Caco-2 (cell line): ENCODE measurements at regions of chr3 and their contacts with region 1.

Region 1: DNA sequence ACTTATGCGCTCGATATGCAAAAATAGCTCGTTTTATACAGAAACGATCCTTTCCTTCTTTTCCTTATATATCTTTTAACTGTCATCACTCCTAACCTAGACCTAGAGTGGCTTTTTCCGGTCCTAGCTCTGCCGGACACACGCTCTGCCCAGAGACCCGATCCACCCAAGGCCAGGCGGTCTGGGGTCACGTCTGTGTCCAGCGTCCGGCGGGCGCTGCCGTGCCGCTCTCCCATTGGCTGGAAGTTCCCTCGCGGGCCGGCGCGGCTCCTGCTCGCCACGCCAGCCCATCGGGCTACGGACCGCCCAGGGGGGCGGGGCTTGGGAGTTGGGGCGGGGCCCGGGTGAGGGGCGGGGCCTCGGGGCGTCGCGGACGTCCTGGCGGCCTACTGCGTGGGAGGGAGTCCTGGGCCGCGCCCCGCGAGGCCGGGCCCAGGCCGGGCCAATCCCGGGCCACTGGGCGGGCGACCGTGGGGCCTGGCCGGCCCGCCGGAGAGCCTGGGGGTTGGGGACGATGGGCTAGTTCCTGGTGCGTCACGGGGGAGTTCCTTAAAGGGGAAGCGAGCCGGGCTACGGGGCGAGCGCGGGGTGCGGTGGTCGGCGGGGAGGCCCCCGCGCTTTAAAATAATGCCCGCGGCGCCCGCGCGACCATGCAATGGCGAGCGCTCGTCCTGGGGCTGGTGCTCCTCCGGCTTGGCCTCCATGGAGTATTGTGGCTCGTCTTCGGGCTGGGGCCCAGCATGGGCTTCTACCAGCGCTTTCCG is at the start of gene EDEM1:
- DNase-seq: peak; percentile 93 to 97
- H3K4me3 ChIP-seq: peak within 1 kb of the TSS; percentile 94
- H3K4me3 Mint-ChIP-seq: peak within 1 kb of the TSS; percentile 77
- H3K27ac Mint-ChIP-seq: peak within 1 kb of the TSS; percentile 95
- H3K4me1 ChIP-seq: peaks cover 16% of the 10 kb centered on the region; the same call in 1 of the 2 replicates
- H3K4me1 Mint-ChIP-seq: peaks cover 12% of the 10 kb centered on the region
- H3K27me3 ChIP-seq: no peaks in the 10 kb centered on the region
- H3K27me3 Mint-ChIP-seq: no peaks in the 10 kb centered on the region
- CTCF ChIP-seq: no peak
- total RNA-seq, gene EDEM1: 42.6 and 51.3 TPM in 2 replicates

Region 2: DNA sequence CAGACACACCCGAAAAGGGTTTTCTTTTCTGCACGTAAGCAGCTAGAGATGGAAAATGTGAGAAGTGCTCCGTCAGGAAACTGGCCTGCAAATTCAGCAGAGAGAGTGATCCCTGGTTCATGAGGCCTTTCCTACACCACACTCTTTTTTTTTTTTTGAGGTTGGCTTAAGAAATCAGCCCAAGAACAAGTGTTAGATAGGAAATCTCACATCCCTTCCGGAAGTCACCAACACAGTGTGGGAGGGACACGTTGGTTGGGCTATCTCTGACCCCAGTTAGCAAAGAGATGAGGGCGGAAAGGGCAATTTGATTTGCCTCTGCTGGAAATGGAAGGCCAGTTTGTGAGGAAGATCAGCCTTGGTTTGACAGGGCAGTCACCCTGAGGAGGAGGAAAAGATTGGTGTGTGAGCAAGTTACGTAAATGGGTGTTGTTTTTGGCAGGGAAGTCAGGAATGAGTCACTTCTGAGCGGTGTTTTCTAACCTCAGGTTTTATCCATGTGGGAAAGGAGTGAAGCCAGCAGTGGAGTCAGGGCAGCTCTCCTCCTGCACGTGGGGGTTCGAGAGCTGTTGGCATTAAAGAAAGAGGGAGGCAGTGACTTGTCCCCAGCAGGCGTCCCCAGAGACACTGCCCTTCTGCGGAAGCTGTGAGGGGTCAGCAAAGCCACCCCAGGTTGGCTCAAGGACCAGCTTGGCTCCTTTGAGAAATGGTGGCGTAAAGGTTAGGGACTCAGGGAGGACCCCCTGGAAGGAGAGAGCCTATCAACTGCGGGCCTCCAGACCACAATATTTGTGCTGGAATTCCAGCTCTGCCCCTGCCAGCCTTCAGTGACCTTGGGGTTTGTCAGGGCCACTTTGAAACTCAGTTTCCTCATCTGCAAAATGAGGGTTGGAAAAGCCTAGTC is 445.7 kb before region 1 on chr3:
- CTCF ChIA-PET with region 1: no interaction called
- POLR2A ChIA-PET with region 1: no interaction called
- intact Hi-C with region 1: loop called (anchors 5 kb)
- DNase-seq: no peak
- H3K4me3 ChIP-seq: no peak overlapping the region
- H3K4me3 Mint-ChIP-seq: no peak overlapping the region
- H3K27ac Mint-ChIP-seq: no peak overlapping the region
- H3K4me1 ChIP-seq: peaks cover 36% of the 10 kb centered on the region
- H3K4me1 Mint-ChIP-seq: peaks cover 28% of the 10 kb centered on the region
- H3K27me3 ChIP-seq: no peaks in the 10 kb centered on the region
- H3K27me3 Mint-ChIP-seq: no peaks in the 10 kb centered on the region
- CTCF ChIP-seq: no peak

Region 3: GRCh38 chr3:5122030-5122740 is 65.2 kb before region 1 on chr3 and contains the start of gene ARL8B:
- CTCF ChIA-PET with region 1: no interaction called
- POLR2A ChIA-PET with region 1: interaction called, 3 read pairs
- intact Hi-C with region 1: loop called (anchors 1 kb)
- DNase-seq: peak; percentile 87 to 94
- H3K4me3 ChIP-seq: peak within 1 kb of the TSS; percentile 99
- H3K4me3 Mint-ChIP-seq: peak within 1 kb of the TSS; percentile 84
- H3K27ac Mint-ChIP-seq: peak within 1 kb of the TSS; percentile 84
- H3K4me1 ChIP-seq: peaks cover 3% of the 10 kb centered on the region; the same call in 1 of the 2 replicates
- H3K4me1 Mint-ChIP-seq: peaks cover 14% of the 10 kb centered on the region
- H3K27me3 ChIP-seq: no peaks in the 10 kb centered on the region
- H3K27me3 Mint-ChIP-seq: no peaks in the 10 kb centered on the region
- CTCF ChIP-seq: peak; percentile 83 to 94
- total RNA-seq, gene ARL8B: 56.1 and 65.0 TPM in 2 replicates

Region 4: GRCh38 chr3:5136211-5136918 is 51.0 kb before region 1 on chr3:
- CTCF ChIA-PET with region 1: interaction called, 3 read pairs
- POLR2A ChIA-PET with region 1: no interaction called
- intact Hi-C with region 1: loop called (anchors 1 kb)
- DNase-seq: peak in 1 of 2 experiments; percentile 37
- H3K4me3 ChIP-seq: no peak overlapping the region
- H3K4me3 Mint-ChIP-seq: no peak overlapping the region
- H3K27ac Mint-ChIP-seq: no peak overlapping the region
- H3K4me1 ChIP-seq: peaks cover 19% of the 10 kb centered on the region
- H3K4me1 Mint-ChIP-seq: peaks cover 18% of the 10 kb centered on the region
- H3K27me3 ChIP-seq: no peaks in the 10 kb centered on the region
- H3K27me3 Mint-ChIP-seq: no peaks in the 10 kb centered on the region
- CTCF ChIP-seq: peak; percentile 18 to 62

Region 5: DNA sequence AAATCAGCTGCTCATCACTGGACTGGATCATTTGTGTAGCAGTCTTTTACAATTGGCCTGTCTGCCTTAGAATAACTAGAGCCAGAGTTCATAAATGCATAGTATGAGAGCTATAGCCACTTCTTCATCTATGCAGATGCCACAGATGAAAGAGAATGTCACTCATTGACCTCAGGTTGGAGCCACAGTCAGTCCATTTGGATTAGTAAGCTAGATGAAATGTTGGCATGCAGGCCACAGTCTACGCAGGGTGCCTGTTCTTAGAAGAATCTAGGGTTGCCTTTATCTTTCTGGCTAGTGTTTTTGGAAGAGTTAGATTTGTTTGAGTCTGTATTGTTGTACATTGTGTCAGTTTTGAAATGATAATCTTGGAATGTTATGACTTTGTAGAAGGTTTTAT is 25.2 kb before region 1 on chr3:
- CTCF ChIA-PET with region 1: no interaction called
- POLR2A ChIA-PET with region 1: interaction called, 10 read pairs
- intact Hi-C with region 1: no loop called
- DNase-seq: peak in 1 of 2 experiments; percentile 18
- H3K4me3 ChIP-seq: no peak overlapping the region
- H3K4me3 Mint-ChIP-seq: no peak overlapping the region
- H3K27ac Mint-ChIP-seq: no peak overlapping the region
- H3K4me1 ChIP-seq: peaks cover 20% of the 10 kb centered on the region
- H3K4me1 Mint-ChIP-seq: peaks cover 14% of the 10 kb centered on the region
- H3K27me3 ChIP-seq: no peaks in the 10 kb centered on the region
- H3K27me3 Mint-ChIP-seq: no peaks in the 10 kb centered on the region
- CTCF ChIP-seq: no peak

Region 6: GRCh38 chr3:5317557-5317956 is 130.2 kb after region 1 on chr3:
- CTCF ChIA-PET with region 1: no interaction called
- POLR2A ChIA-PET with region 1: no interaction called
- intact Hi-C with region 1: no loop called
- DNase-seq: no peak
- H3K4me3 ChIP-seq: no peak overlapping the region
- H3K4me3 Mint-ChIP-seq: no peak overlapping the region
- H3K27ac Mint-ChIP-seq: no peak overlapping the region
- H3K4me1 ChIP-seq: peaks cover 6% of the 10 kb centered on the region
- H3K4me1 Mint-ChIP-seq: peaks cover 12% of the 10 kb centered on the region
- H3K27me3 ChIP-seq: no peaks in the 10 kb centered on the region
- H3K27me3 Mint-ChIP-seq: no peaks in the 10 kb centered on the region
- CTCF ChIP-seq: no peak